PC-9 (cell line): ENCODE measurements at regions of chr7 and their contacts with region 1.

Region 1: DNA sequence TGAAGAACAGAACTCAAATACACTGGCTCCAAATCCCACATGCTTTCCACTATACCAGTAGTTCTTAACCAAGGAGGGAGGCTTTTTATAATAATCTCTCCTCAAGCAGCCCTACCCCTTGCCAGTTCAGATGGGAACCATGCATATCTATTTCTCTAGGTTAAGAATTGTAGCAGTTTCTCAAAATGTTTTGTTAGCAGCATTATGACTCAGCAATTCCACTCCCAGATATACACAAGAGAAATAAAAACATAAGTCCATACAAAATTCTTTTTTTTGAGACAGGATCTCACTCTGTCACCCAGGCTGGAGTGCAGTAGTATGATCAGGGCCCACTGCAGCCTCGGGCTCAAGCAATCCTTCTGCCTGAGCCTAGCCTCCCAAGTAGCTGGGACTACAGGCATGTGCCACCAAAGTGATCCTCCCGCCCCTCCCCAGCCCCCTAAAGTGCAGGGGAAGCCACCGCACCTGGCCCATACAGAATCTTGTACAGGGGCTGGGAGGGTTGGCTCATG is 18.1 kb downstream of the YWHAG start:
- DNase-seq: peak in 1 of 2 experiments; percentile 41
- H3K4me3 ChIP-seq: no peak overlapping the region
- H3K27ac ChIP-seq: peak overlapping the region; percentile 84
- H3K4me1 ChIP-seq: peaks cover 63% of the 10 kb centered on the region
- H3K27me3 ChIP-seq: no peaks in the 10 kb centered on the region
- CTCF ChIP-seq: no peak

Region 2: DNA sequence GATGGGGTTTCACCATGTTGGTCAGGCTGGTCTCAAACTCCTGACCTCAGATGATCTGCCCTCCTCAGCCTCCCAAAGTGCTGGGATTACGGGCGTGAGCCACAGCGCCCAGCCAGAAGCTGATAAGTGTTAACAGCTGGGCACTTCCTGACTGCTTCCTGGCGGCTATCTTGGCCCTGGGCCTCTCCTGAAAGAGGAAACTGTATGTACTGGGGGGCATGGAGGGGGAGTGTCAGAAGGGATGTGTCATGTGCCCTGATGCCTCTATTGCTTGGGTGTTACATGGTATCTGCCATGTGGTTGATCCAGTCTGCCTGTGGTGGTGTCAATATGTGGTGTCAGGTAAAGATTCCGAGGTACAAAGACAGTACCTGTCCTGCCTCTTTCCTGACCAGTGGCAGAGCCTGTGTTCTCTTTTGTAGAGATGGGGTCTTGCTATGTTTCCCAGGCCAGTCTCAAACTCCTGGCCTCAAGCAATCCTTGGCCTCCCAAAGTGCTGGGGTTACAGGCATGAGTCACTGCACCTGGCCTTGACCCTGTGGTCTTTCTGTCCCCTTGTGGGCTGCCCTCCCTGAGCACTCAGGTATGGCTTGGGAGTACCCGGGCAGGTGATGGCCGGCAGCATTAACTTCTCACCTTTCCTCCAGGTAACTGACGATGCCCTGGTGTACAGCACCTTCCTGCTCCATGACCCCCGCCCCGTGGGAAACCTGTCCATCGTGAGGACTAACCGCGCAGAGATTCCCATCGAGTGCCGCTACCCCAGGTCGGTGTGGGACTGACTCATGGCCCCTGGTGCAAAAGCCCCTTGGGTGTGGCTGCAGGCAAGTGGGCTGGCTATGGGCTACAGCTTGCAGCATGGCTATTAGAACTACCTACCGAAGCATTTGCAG is 88.4 kb after region 1 on chr7:
- CTCF ChIA-PET with region 1: no interaction called
- POLR2A ChIA-PET with region 1: interaction called, 11 read pairs
- intact Hi-C with region 1: loop called (anchors 5 kb)
- DNase-seq: peak in 1 of 2 experiments; percentile 41
- H3K4me3 ChIP-seq: no peak overlapping the region
- H3K27ac ChIP-seq: no peak overlapping the region
- H3K4me1 ChIP-seq: peaks cover 14% of the 10 kb centered on the region
- H3K27me3 ChIP-seq: no peaks in the 10 kb centered on the region
- CTCF ChIP-seq: no peak